Heart right ventricle (tissue), 16 donors: ENCODE measurements at regions of chr5 and their contacts with region 1.

Region 1: GRCh38 chr5:132419502-132420468 is 50.3 kb downstream of the SLC22A5 start:
- DNase-seq: peak; percentile 73 to 78
- ATAC-seq: peak; percentile 50 to 82 (median 68)
- H3K4me3 ChIP-seq: peak overlapping the region in 2 of 10 donors; percentile 10 to 15
- H3K27ac ChIP-seq: peak overlapping the region in 9 of 10 donors; percentile 72 to 100 (median 86)
- H3K4me1 ChIP-seq: peaks cover 35 to 100% (median 94%) of the 10 kb centered on the region in 9 donors
- H3K27me3 ChIP-seq: no peaks in the 10 kb centered on the region
- CTCF ChIP-seq: peak; percentile 79 to 93 (median 89)

Region 2: DNA sequence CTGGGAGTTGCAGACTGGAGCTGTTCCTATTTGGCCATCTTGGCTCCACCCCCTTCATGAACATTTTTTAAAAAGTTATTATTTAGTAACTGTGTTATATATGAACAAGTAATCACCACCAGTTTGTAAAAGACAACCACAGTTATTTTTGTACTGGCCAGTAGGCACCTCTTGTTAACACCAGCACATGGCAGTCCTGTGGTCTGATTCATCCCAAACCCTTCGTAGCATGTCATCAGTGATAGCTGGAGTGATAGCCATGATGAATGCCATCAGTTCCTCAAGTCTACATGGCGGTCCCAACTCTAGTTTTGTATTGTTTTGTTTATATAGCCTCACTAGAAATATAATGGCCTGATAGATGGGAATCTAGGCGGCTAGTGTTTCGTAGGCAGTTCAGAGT is 1081.7 kb before region 1 on chr5:
- intact Hi-C with region 1: no loop called
- DNase-seq: no peak
- ATAC-seq: no peak
- H3K4me3 ChIP-seq: no peak overlapping the region
- H3K27ac ChIP-seq: no peak overlapping the region
- H3K4me1 ChIP-seq: no peaks in the 10 kb centered on the region
- H3K27me3 ChIP-seq: no peaks in the 10 kb centered on the region
- CTCF ChIP-seq: no peak

Region 3: DNA sequence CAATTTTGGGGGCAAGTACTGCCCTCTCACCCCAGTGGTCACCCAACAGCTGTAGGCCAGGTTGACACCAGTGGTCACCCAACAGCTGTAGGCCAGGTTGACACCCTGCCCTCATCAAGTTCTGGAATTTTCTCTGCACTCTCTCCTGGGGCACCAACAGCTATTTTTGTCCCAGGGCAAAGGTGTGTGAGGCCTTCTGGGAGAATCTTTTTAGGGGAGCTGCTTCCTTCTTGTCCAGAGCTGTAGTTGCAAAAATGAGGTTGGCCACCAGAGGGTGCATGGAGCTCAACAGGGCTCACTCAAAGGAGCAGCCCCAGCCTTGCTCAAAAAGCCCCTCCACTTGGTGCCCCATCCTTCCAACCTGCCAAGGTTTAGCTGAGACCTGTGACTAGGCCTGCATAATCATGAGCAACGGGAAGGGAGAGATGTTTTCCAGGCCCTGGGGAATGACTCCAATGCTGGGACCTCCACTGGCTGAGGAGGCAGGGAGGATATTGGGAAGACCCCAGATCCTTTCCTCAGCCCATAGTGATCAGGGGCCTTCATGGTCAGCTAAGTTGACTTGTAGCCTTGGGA is 181.5 kb before region 1 on chr5:
- intact Hi-C with region 1: no loop called
- DNase-seq: peak; percentile 54 to 66
- ATAC-seq: peak; percentile 51 to 83 (median 78)
- H3K4me3 ChIP-seq: no peak overlapping the region
- H3K27ac ChIP-seq: no peak overlapping the region
- H3K4me1 ChIP-seq: peaks cover 0 to 2% (median 0%) of the 10 kb centered on the region in 9 donors
- H3K27me3 ChIP-seq: no peaks in the 10 kb centered on the region
- CTCF ChIP-seq: peak; percentile 72 to 88 (median 83)

Region 4: DNA sequence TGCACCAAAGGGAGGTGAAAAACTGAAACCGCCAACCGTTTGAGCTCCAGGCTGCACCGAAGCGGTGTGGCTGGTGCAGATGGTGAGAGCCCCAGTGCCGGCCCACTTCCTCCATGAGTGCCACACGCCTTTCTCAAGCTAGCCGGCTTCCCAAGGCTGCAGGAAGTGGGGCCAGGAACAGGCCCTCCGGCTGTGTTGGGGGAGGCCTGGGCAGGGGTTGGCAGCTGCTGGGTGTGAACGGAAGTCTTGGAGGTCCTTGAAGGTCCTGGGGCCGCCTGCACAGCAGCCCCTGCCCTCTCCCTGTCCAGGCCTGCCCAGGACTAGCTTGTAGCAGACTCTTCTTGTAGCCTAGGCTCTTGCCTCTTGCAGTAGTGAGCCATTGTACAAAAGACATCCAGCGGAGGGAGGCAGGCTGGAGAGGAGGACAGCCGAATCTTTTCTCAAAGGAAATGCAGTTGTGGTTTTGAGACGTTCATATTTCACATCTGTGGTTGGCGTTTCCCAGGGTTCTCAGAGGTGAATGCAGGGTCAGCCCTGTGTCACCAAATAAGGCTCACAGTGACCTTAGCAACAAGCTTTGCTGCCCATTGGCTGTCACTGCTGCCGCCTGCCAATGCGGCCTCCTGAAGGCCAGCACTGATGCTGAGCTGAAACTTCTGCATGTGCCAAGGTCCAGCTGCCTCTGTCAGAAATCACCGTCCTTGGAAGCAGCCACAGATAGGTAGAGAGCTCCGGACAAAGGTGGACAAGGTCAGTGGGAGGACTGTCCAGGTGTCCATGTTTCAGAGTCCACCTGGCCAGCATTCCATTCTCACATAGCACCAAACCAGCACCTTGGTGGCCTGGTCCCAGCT is 46.9 kb after region 1 on chr5:
- intact Hi-C with region 1: loop called in 1 of 10 experiments (anchors 5 kb)
- DNase-seq: peak in 1 of 2 donors; percentile 55
- ATAC-seq: peak in 7 of 8 donors; percentile 29 to 62 (median 58)
- H3K4me3 ChIP-seq: peak overlapping the region in 2 of 10 donors; percentile 11 to 17
- H3K27ac ChIP-seq: peak overlapping the region in 9 of 10 donors; percentile 27 to 82 (median 67)
- H3K4me1 ChIP-seq: peaks cover 14 to 100% (median 83%) of the 10 kb centered on the region in 9 donors
- H3K27me3 ChIP-seq: no peaks in the 10 kb centered on the region
- CTCF ChIP-seq: no peak

Region 5: GRCh38 chr5:132495667-132496190 is 75.9 kb after region 1 on chr5:
- intact Hi-C with region 1: loop called in 6 of 10 experiments (anchors 2 to 5 kb)
- DNase-seq: peak; percentile 93 to 94
- ATAC-seq: peak; percentile 72 to 82 (median 79)
- H3K4me3 ChIP-seq: peak overlapping the region; percentile 50 to 88 (median 76)
- H3K27ac ChIP-seq: peak overlapping the region; percentile 84 to 100 (median 94)
- H3K4me1 ChIP-seq: peaks cover 18 to 82% (median 51%) of the 10 kb centered on the region in 9 donors
- H3K27me3 ChIP-seq: no peaks in the 10 kb centered on the region
- CTCF ChIP-seq: peak in 4 of 9 donors; percentile 8 to 41 (median 26)

Region 6: DNA sequence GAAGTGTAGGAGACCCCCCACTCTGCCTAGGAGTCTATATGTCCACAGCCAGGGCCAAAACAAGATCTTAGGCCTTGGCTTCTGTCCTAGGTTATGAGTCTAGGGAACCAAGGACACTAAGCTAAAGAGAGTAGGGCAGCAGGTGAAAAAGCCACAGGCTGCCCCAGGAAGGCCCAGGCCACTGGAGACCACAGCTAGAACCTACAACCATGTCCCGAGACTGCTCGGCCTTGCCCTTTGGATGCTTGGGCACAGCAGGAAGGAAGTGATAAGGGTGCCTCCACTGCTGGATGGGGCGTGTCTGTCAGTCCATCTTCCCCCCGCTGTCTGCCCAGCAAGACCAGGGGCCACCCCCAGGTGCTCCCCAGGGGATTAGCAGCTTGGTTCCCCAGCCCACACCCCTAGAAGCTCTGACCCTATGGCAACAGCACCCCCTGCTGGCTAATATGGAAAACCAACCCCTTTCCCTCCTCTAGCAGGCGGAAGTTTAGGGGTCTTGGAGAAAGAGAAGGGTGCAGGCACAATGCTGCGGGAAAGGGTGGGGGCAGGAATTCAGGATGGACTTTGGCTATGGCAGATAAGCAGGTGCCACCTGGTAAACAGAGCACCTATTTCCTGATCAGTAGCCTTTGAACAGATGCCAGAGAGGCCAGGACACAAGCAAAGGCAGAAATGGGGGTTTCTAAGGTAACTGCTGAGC is 81.3 kb after region 1 on chr5:
- intact Hi-C with region 1: loop called in 2 of 10 experiments (anchors 2 to 5 kb)
- DNase-seq: peak; percentile 55 to 73
- ATAC-seq: peak in 5 of 8 donors; percentile 10 to 46 (median 38)
- H3K4me3 ChIP-seq: no peak overlapping the region
- H3K27ac ChIP-seq: peak overlapping the region in 9 of 10 donors; percentile 0 to 100 (median 46)
- H3K4me1 ChIP-seq: peaks cover 15 to 69% (median 44%) of the 10 kb centered on the region in 9 donors
- H3K27me3 ChIP-seq: no peaks in the 10 kb centered on the region
- CTCF ChIP-seq: peak; percentile 77 to 89 (median 84)

Region 7: GRCh38 chr5:132556763-132557477 is 137.1 kb after region 1 on chr5 and contains the start of gene RAD50:
- intact Hi-C with region 1: no loop called
- DNase-seq: peak; percentile 89 to 94
- ATAC-seq: peak; percentile 97 to 100 (median 99)
- H3K4me3 ChIP-seq: peak within 1 kb of the TSS; percentile 54 to 86 (median 72)
- H3K27ac ChIP-seq: peak within 1 kb of the TSS; percentile 44 to 89 (median 86)
- H3K4me1 ChIP-seq: peaks cover 0 to 23% (median 17%) of the 10 kb centered on the region in 9 donors
- H3K27me3 ChIP-seq: no peaks in the 10 kb centered on the region
- CTCF ChIP-seq: no peak
- total RNA-seq, gene RAD50: 26.6 to 38.5 (median 33.2) TPM

Region 8: DNA sequence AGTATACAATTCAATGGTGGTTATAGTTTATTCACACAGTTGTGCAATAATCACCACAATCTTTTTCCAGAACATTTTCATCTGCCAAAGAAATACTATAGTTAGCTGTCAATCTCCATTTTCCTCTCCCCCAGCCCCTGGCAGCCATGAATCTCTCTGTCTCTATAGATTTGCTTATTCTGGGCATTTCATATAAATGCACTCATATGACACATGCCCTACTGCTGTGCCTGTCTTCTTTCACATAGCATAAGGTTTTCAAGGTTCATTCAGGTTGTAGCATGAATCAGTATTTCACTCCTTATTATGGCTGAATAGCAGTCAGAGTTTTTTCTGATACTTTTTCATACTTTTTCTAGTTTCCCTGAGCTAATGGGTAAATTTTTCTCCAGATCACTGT is 759.6 kb after region 1 on chr5:
- intact Hi-C with region 1: no loop called
- DNase-seq: no peak
- ATAC-seq: no peak
- H3K4me3 ChIP-seq: no peak overlapping the region
- H3K27ac ChIP-seq: no peak overlapping the region
- H3K4me1 ChIP-seq: no peaks in the 10 kb centered on the region
- H3K27me3 ChIP-seq: no peaks in the 10 kb centered on the region
- CTCF ChIP-seq: no peak